CD8-positive, alpha-beta T cell (primary cell): ENCODE measurements at regions of chr10 and their contacts with region 1.

Region 1: GRCh38 chr10:89217057-89217990 is 10.2 kb upstream of the CH25H start:
- DNase-seq: peak; percentile 30 to 75 (median 68)
- ATAC-seq: peak; percentile 63
- H3K4me3 ChIP-seq: no peak overlapping the region
- H3K4me3 Mint-ChIP-seq: no peak overlapping the region
- H3K27ac ChIP-seq: no peak overlapping the region
- H3K27ac Mint-ChIP-seq: peak overlapping the region; percentile 41
- H3K4me1 ChIP-seq: peaks cover 6% of the 10 kb centered on the region
- H3K4me1 Mint-ChIP-seq: peaks cover 8% of the 10 kb centered on the region
- H3K27me3 ChIP-seq: no peaks in the 10 kb centered on the region
- H3K27me3 Mint-ChIP-seq: no peaks in the 10 kb centered on the region
- CTCF ChIP-seq: peak; percentile 81

Region 2: GRCh38 chr10:88565072-88565471 is 652.3 kb before region 1 on chr10:
- CTCF ChIA-PET with region 1: interaction called, 3 read pairs
- POLR2A ChIA-PET with region 1: no interaction called
- intact Hi-C with region 1: loop called in 1 of 2 experiments (anchors 5 kb)
- DNase-seq: peak in 2 of 9 experiments; percentile 17 to 29
- ATAC-seq: no peak
- H3K4me3 ChIP-seq: no peak overlapping the region
- H3K4me3 Mint-ChIP-seq: no peak overlapping the region
- H3K27ac ChIP-seq: no peak overlapping the region
- H3K27ac Mint-ChIP-seq: no peak overlapping the region
- H3K4me1 ChIP-seq: no peaks in the 10 kb centered on the region
- H3K4me1 Mint-ChIP-seq: peaks cover 4% of the 10 kb centered on the region
- H3K27me3 ChIP-seq: no peaks in the 10 kb centered on the region
- H3K27me3 Mint-ChIP-seq: no peaks in the 10 kb centered on the region
- CTCF ChIP-seq: peak; percentile 31

Region 3: DNA sequence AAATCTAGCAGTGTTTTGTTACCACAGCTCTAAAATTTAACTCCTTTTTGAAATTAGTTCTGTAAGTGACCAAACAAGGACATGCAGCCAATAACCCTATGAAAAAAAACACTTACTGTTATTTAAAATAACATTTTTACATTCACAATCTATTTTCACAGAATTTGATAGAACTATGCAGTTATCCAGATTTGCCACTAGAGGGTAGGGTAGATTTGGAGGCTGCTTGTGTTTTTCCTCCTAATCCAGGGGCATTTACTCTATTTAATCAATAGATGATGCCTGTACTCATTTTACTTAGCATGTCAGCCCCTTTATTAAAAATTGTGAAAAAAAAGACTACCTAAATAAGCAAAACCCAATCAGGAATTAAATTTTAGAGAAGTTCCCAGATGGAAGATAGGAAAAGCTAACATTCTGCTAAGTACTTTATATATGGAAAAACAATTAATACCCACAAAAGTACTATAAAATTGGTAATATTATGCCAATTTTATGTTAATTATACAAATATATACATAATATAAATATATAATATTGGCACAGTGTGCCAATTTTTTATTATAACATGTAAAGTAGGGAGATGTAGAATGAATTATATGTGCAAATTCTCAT is 529.4 kb before region 1 on chr10:
- CTCF ChIA-PET with region 1: interaction called, 5 read pairs
- POLR2A ChIA-PET with region 1: no interaction called
- intact Hi-C with region 1: loop called (anchors 5 to 10 kb)
- DNase-seq: peak in 2 of 9 experiments; percentile 24 to 43
- ATAC-seq: no peak
- H3K4me3 ChIP-seq: no peak overlapping the region
- H3K4me3 Mint-ChIP-seq: no peak overlapping the region
- H3K27ac ChIP-seq: no peak overlapping the region
- H3K27ac Mint-ChIP-seq: no peak overlapping the region
- H3K4me1 ChIP-seq: no peaks in the 10 kb centered on the region
- H3K4me1 Mint-ChIP-seq: no peaks in the 10 kb centered on the region
- H3K27me3 ChIP-seq: no peaks in the 10 kb centered on the region
- H3K27me3 Mint-ChIP-seq: peaks cover 3% of the 10 kb centered on the region
- CTCF ChIP-seq: peak; percentile 96

Region 4: DNA sequence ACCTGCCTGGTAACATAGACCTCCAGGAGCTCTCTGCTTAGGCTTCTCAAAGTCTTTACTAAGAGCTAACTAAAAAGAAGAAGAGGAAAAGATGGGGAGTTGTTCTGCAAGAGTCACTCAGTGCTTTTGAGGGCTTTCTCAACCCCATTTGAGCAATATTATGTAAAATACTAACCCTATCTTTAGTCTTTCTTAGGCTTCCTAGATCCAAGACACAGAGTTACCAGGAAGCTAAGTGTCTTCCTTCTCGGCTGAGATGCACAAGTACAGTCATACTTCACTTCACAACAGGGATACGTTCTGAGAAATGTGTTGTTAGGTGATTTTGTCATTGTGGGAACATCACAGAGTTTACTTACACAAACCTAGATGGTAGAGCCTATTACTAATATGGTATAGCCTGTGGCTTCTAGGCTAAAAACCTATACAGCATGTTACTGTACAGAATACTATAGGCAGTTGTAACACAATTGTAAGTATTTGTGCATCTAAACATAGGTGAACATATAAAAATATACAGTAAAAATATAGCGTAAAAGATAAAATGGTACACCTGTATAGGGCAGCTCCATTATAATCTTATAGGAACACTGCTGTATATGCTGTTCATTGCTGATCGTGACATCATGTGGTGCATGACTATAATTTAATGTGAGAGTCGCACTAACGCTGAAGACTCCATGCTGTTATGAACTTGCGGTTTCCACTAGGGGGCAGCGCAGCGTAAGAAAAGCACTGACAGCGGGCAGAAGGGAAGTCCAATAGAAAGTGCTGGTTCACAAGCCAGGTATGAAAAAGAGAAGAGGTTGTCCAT is 382.0 kb before region 1 on chr10:
- CTCF ChIA-PET with region 1: interaction called, 22 read pairs
- POLR2A ChIA-PET with region 1: no interaction called
- intact Hi-C with region 1: loop called (anchors 1 to 5 kb)
- DNase-seq: peak; percentile 73 to 92 (median 86)
- ATAC-seq: peak; percentile 85
- H3K4me3 ChIP-seq: no peak overlapping the region
- H3K4me3 Mint-ChIP-seq: no peak overlapping the region
- H3K27ac ChIP-seq: no peak overlapping the region
- H3K27ac Mint-ChIP-seq: no peak overlapping the region
- H3K4me1 ChIP-seq: peaks cover 17% of the 10 kb centered on the region
- H3K4me1 Mint-ChIP-seq: peaks cover 33% of the 10 kb centered on the region
- H3K27me3 ChIP-seq: no peaks in the 10 kb centered on the region
- H3K27me3 Mint-ChIP-seq: no peaks in the 10 kb centered on the region
- CTCF ChIP-seq: peak; percentile 78

Region 5: GRCh38 chr10:89183571-89183970 is 33.8 kb before region 1 on chr10:
- CTCF ChIA-PET with region 1: no interaction called
- POLR2A ChIA-PET with region 1: no interaction called
- intact Hi-C with region 1: no loop called
- DNase-seq: no peak
- ATAC-seq: no peak
- H3K4me3 ChIP-seq: no peak overlapping the region
- H3K4me3 Mint-ChIP-seq: no peak overlapping the region
- H3K27ac ChIP-seq: no peak overlapping the region
- H3K27ac Mint-ChIP-seq: no peak overlapping the region
- H3K4me1 ChIP-seq: no peaks in the 10 kb centered on the region
- H3K4me1 Mint-ChIP-seq: no peaks in the 10 kb centered on the region
- H3K27me3 ChIP-seq: no peaks in the 10 kb centered on the region
- H3K27me3 Mint-ChIP-seq: no peaks in the 10 kb centered on the region
- CTCF ChIP-seq: no peak

Region 6: DNA sequence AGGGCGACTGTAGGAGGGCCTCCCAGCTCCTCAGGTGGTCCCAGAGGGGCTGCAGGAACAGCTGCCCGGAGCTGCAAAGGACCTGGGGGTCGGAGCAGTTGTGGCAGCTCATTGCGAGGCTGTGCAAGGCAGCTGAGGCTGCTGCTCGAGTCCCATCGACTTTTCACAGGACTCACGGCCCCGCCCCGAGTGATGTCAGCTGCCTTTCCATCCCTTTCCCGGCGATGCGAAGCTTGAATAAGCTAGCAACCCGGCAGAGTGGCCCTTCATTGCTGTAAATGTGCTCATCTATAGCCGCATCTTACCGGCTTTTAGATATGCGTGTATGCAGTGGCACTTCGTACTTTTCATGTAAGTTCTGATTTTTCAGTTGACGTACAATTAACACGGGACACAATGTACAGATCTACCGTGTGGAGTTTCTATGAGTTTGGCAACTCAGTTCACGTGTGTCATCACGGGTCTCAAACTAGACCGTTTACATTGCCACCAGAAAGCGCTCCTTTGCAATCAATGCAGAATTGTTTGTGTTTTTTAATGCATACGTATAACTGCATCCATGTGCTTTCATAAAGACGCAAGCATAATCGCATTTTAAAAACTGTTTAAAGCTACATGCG is 10.0 kb before region 1 on chr10 and contains the start of gene CH25H:
- CTCF ChIA-PET with region 1: interaction called, 27 read pairs
- POLR2A ChIA-PET with region 1: interaction called, 3 read pairs
- intact Hi-C with region 1: no loop called
- DNase-seq: peak in 6 of 9 experiments; percentile 30 to 61 (median 50)
- ATAC-seq: peak; percentile 39
- H3K4me3 ChIP-seq: peak within 1 kb of the TSS; percentile 51 to 67
- H3K4me3 Mint-ChIP-seq: peak within 1 kb of the TSS; percentile 81
- H3K27ac ChIP-seq: no peak within 1 kb of the TSS
- H3K27ac Mint-ChIP-seq: peak within 1 kb of the TSS; percentile 62
- H3K4me1 ChIP-seq: peaks cover 19% of the 10 kb centered on the region
- H3K4me1 Mint-ChIP-seq: peaks cover 16% of the 10 kb centered on the region
- H3K27me3 ChIP-seq: peaks cover 12 to 28% of the 10 kb centered on the region in 2 experiments
- H3K27me3 Mint-ChIP-seq: peaks cover 47% of the 10 kb centered on the region
- CTCF ChIP-seq: no peak
- total RNA-seq, gene CH25H: 0.44 to 0.54 TPM

Region 7: GRCh38 chr10:89251409-89252224 is 34.3 kb after region 1 on chr10 and contains the start of gene LIPA:
- CTCF ChIA-PET with region 1: interaction called, 9 read pairs
- POLR2A ChIA-PET with region 1: interaction called, 3 read pairs
- intact Hi-C with region 1: loop called in 1 of 2 experiments (anchors 5 kb)
- DNase-seq: peak; percentile 93 to 99 (median 96)
- ATAC-seq: peak; percentile 96
- H3K4me3 ChIP-seq: peak within 1 kb of the TSS; percentile 82 to 84
- H3K4me3 Mint-ChIP-seq: peak within 1 kb of the TSS; percentile 90
- H3K27ac ChIP-seq: peak within 1 kb of the TSS; percentile 63 to 65
- H3K27ac Mint-ChIP-seq: peak within 1 kb of the TSS; percentile 88
- H3K4me1 ChIP-seq: peaks cover 12% of the 10 kb centered on the region
- H3K4me1 Mint-ChIP-seq: peaks cover 23% of the 10 kb centered on the region
- H3K27me3 ChIP-seq: no peaks in the 10 kb centered on the region
- H3K27me3 Mint-ChIP-seq: peaks cover 2% of the 10 kb centered on the region
- CTCF ChIP-seq: no peak
- total RNA-seq, gene LIPA: 9.7 to 12.1 TPM